Spleen (tissue), 13 donors: ENCODE measurements at regions of chr6 and their contacts with region 1.

Region 1: GRCh38 chr6:24283043-24283985 is 74.5 kb downstream of the DCDC2 start:
- DNase-seq: no peak
- H3K4me3 ChIP-seq: peak overlapping the region in 2 of 8 donors; percentile 8 to 45
- H3K27ac ChIP-seq: no peak overlapping the region
- H3K4me1 ChIP-seq: peaks cover 0 to 16% (median 13%) of the 10 kb centered on the region in 6 donors
- H3K27me3 ChIP-seq: peaks cover 0 to 10% (median 0%) of the 10 kb centered on the region in 7 donors
- CTCF ChIP-seq: peak in 8 of 11 experiments; percentile 14 to 66 (median 46)
- POLR2A ChIP-seq: no peak

Region 2: GRCh38 chr6:24340998-24341938 is 58.0 kb after region 1 on chr6:
- intact Hi-C with region 1: no loop called
- DNase-seq: no peak
- H3K4me3 ChIP-seq: no peak overlapping the region
- H3K27ac ChIP-seq: no peak overlapping the region
- H3K4me1 ChIP-seq: no peaks in the 10 kb centered on the region
- H3K27me3 ChIP-seq: peaks cover 0 to 25% (median 0%) of the 10 kb centered on the region in 7 donors
- CTCF ChIP-seq: no peak
- POLR2A ChIP-seq: no peak

Region 3: GRCh38 chr6:24385536-24386269 is 102.4 kb after region 1 on chr6:
- intact Hi-C with region 1: loop called (anchors 10 kb)
- DNase-seq: no peak
- H3K4me3 ChIP-seq: no peak overlapping the region
- H3K27ac ChIP-seq: no peak overlapping the region
- H3K4me1 ChIP-seq: no peaks in the 10 kb centered on the region
- H3K27me3 ChIP-seq: peaks cover 0 to 14% (median 0%) of the 10 kb centered on the region in 7 donors
- CTCF ChIP-seq: no peak
- POLR2A ChIP-seq: no peak